ENCODE measurements at regions of chr19 and their contacts with region 1.

Region 1: GRCh38 chr19:44570984-44571684 is 41.7 kb upstream of the CEACAM20 start:
- H3K4me3 ChIP-seq: no peak overlapping the region
- H3K27ac ChIP-seq: no peak overlapping the region
- H3K4me1 ChIP-seq: no peaks in the 10 kb centered on the region
- CTCF ChIP-seq: no peak

Region 2: GRCh38 chr19:44435481-44435880 is 135.7 kb before region 1 on chr19:
- CTCF ChIA-PET with region 1: no interaction called
- POLR2A ChIA-PET with region 1: no interaction called
- H3K4me3 ChIP-seq: no peak overlapping the region
- H3K27ac ChIP-seq: no peak overlapping the region
- H3K4me1 ChIP-seq: no peaks in the 10 kb centered on the region
- CTCF ChIP-seq: no peak

Region 3: DNA sequence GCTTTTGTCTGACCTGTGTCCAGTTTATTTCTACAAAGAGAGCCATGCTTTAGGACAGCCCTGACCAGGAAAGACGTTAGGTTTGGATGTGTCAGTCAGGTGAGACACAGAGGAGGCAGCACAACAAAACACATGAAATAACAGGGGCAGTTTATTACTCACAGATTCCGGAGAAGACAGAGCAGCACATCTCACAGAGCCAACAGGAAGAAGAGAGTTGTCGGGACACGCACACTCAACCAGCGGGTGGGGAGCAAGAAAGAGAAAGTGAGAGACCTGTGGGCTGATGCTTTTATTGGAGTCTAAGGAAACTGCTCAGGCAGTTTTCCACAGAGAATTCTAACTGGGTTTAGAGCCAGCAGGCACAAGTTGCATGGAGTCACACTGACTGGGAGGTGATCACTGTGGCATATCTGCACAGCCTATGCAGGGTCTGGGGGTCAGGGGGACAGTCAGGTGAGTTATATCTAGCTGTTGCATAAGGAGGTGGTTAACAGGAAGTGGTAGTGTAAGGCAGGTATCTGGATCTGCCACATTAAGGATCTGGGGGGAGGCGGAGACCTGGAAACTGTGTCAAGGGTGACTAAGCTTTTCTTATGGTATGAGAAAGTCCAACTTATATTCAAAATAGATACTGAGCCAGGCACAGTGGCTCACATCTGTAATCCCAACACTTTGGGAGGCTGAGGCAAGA is 17.5 kb before region 1 on chr19:
- CTCF ChIA-PET with region 1: interaction called, 17 read pairs
- POLR2A ChIA-PET with region 1: no interaction called
- H3K4me3 ChIP-seq: no peak overlapping the region
- H3K27ac ChIP-seq: no peak overlapping the region
- H3K4me1 ChIP-seq: 0 out of 2 replicates have a peak, but pooled peaks cover 3% of the 10 kb centered on the region
- CTCF ChIP-seq: no peak

Region 4: DNA sequence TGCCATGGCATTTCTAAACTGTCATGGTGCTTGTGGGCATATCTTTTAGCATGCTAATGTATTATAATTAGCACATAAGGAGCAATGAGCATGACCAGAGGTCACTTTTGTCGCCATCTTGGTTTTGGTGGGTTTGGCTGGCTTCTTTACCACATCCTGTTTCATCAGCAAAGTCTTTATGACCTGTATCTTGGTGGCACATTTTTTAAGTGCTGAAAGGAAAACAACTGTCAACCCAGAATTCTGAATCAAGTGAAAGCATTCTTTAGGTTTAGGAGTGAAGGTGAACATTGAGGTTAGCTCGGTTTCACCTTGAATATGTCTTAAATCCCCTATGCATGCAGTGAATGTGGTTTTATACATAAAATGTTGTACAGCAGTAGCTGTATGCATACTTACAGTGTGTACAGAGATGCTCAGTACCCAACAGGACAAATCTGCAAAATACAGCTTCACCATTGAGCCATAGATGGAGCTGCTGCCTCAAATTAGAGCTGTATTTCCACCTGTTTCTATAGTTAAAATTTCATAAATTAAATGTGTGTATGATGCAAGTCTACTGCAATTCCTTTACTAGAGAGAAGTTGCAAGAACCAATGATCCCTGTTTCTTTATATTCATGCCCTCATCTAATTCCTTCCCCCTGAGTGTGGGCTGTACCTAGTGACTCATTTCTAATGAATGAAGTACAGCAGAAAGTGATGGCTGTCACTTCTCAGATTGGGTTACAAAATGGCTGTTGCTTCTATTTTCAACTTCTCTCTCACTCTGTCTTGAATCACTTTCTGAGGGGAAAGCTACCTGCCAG is 17.0 kb after region 1 on chr19:
- CTCF ChIA-PET with region 1: interaction called, 31 read pairs
- POLR2A ChIA-PET with region 1: no interaction called
- H3K4me3 ChIP-seq: no peak overlapping the region
- H3K27ac ChIP-seq: no peak overlapping the region
- H3K4me1 ChIP-seq: no peaks in the 10 kb centered on the region
- CTCF ChIP-seq: no peak

Region 5: DNA sequence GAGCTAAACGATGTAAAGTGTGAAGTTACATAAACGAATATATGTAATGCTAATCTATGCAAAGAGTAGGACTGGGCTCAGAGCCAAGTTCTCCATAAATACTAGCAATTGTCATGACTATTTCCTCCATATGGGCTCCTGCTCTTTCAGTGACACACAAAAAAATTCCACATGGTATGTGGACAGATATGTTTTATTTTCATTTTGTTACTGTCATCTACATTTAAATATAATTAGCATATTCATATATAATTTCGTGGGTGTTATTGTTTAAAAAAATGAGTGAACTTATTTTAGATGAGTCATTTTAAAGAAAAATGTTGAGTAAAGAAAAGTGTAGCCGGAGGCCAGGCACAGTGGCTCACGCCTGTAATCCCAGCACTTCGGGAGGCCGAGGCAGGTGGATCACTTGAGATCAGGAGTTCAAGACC is 37.3 kb after region 1 on chr19:
- CTCF ChIA-PET with region 1: interaction called, 11 read pairs
- POLR2A ChIA-PET with region 1: no interaction called
- H3K4me3 ChIP-seq: no peak overlapping the region
- H3K27ac ChIP-seq: no peak overlapping the region
- H3K4me1 ChIP-seq: no peaks in the 10 kb centered on the region; the same call in 1 of the 2 replicates
- CTCF ChIP-seq: no peak

Region 6: DNA sequence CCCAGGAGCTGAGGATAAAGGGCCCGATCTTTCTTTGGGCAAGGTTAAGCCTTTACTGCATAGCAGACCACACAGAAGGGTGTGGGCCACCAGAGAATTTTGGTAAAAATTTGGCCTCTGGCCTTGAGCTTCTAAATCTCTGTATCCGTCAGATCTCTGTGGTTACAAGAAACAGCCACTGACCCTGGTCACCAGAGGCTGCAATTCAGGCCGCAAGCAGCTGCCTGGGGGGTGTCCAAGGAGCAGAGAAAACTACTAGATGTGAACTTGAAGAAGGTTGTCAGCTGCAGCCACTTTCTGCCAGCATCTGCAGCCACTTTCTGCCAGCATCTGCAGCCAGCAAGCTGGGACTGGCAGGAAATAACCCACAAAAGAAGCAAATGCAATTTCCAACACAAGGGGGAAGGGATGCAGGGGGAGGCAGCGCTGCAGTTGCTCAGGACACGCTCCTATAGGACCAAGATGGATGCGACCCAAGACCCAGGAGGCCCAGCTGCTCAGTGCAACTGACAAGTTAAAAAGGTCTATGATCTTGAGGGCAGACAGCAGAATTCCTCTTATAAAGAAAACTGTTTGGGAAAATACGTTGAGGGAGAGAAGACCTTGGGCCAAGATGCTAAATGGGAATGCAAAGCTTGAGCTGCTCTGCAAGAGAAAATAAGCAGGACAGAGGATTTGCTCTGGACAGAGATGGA is 91.7 kb after region 1 on chr19:
- CTCF ChIA-PET with region 1: interaction called, 52 read pairs
- POLR2A ChIA-PET with region 1: interaction called, 3 read pairs
- H3K4me3 ChIP-seq: no peak overlapping the region
- H3K27ac ChIP-seq: no peak overlapping the region
- H3K4me1 ChIP-seq: no peaks in the 10 kb centered on the region
- CTCF ChIP-seq: no peak

Region 7: DNA sequence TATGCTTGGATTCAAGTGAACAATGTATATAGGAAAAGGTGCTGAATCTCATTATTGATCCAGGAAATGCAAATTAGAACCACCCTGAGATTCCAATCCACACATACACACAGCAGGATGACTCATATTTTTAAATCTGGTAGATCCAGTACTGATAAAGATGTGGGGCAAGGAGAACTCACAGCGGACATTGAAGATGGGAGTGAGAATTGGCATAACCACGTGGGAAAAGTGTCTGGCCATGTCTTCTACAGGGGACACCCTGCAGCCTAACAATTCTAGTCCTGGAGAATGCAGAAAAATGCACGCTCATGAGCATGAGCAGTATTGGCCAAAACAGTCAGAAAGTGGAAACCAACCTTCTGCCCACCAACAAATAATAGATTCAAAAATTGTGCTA is 163.9 kb after region 1 on chr19:
- CTCF ChIA-PET with region 1: no interaction called
- POLR2A ChIA-PET with region 1: no interaction called
- H3K4me3 ChIP-seq: no peak overlapping the region
- H3K27ac ChIP-seq: no peak overlapping the region
- H3K4me1 ChIP-seq: no peaks in the 10 kb centered on the region
- CTCF ChIP-seq: no peak

Measured in HEK293 (cell line).